ENCODE measurements at regions of chr16 and their contacts with region 1.

Region 1: GRCh38 chr16:31440516-31441184 is 1.9 kb downstream of the ZNF843 start:
- DNase-seq: peak in 1 of 5 donors; percentile 11
- H3K4me3 ChIP-seq: no peak overlapping the region
- H3K27ac ChIP-seq: no peak overlapping the region
- H3K4me1 ChIP-seq: no peaks in the 10 kb centered on the region
- H3K27me3 ChIP-seq: no peaks in the 10 kb centered on the region
- CTCF ChIP-seq: no peak

Region 2: GRCh38 chr16:30984669-30985400 is 455.8 kb before region 1 on chr16 and contains the start of gene HSD3B7:
- intact Hi-C with region 1: loop called (anchors 10 kb)
- DNase-seq: peak; percentile 85 to 96 (median 90)
- H3K4me3 ChIP-seq: peak within 1 kb of the TSS; percentile 44 to 70 (median 63)
- H3K27ac ChIP-seq: peak within 1 kb of the TSS; percentile 43 to 69
- H3K4me1 ChIP-seq: peaks cover 0 to 9% (median 5%) of the 10 kb centered on the region in 3 donors
- H3K27me3 ChIP-seq: no peaks in the 10 kb centered on the region
- CTCF ChIP-seq: peak; percentile 86
- total RNA-seq, gene HSD3B7: 40.5 TPM

Region 3: GRCh38 chr16:31395647-31396046 is 45.0 kb before region 1 on chr16:
- intact Hi-C with region 1: no loop called
- DNase-seq: peak in 1 of 5 donors; percentile 72
- H3K4me3 ChIP-seq: no peak overlapping the region
- H3K27ac ChIP-seq: no peak overlapping the region
- H3K4me1 ChIP-seq: no peaks in the 10 kb centered on the region
- H3K27me3 ChIP-seq: no peaks in the 10 kb centered on the region
- CTCF ChIP-seq: no peak